Tibial artery (tissue), 4 donors: ENCODE measurements at regions of chr17 and their contacts with region 1.

Region 1: GRCh38 chr17:76278952-76279741 is 14.0 kb downstream of the UBALD2 start:
- DNase-seq: peak; percentile 86 to 89
- H3K4me3 ChIP-seq: no peak overlapping the region
- H3K27ac ChIP-seq: no peak overlapping the region
- H3K4me1 ChIP-seq: peaks cover 0 to 5% (median 0%) of the 10 kb centered on the region in 4 donors
- H3K27me3 ChIP-seq: no peaks in the 10 kb centered on the region
- CTCF ChIP-seq: peak; percentile 95 to 97

Region 2: GRCh38 chr17:75904749-75905521 is 374.2 kb before region 1 on chr17 and contains the start of gene MRPL38:
- intact Hi-C with region 1: loop called (anchors 10 kb)
- DNase-seq: peak; percentile 89 to 96
- H3K4me3 ChIP-seq: peak within 1 kb of the TSS; percentile 75 to 79
- H3K27ac ChIP-seq: peak within 1 kb of the TSS; percentile 84 to 91
- H3K4me1 ChIP-seq: peaks cover 0 to 14% (median 8%) of the 10 kb centered on the region in 4 donors
- H3K27me3 ChIP-seq: no peaks in the 10 kb centered on the region
- CTCF ChIP-seq: peak; percentile 96 to 100

Region 3: GRCh38 chr17:76121932-76122430 is 157.2 kb before region 1 on chr17:
- intact Hi-C with region 1: loop called (anchors 2 kb)
- DNase-seq: no peak
- H3K4me3 ChIP-seq: peak overlapping the region; percentile 39 to 55
- H3K27ac ChIP-seq: peak overlapping the region; percentile 5 to 17
- H3K4me1 ChIP-seq: peaks cover 0 to 11% (median 10%) of the 10 kb centered on the region in 4 donors
- H3K27me3 ChIP-seq: peaks cover 0 to 37% of the 10 kb centered on the region in 2 donors
- CTCF ChIP-seq: no peak

Region 4: GRCh38 chr17:76327696-76328095 is 48.5 kb after region 1 on chr17:
- intact Hi-C with region 1: no loop called
- DNase-seq: peak in 1 of 2 donors; percentile 48
- H3K4me3 ChIP-seq: no peak overlapping the region
- H3K27ac ChIP-seq: no peak overlapping the region
- H3K4me1 ChIP-seq: no peaks in the 10 kb centered on the region
- H3K27me3 ChIP-seq: no peaks in the 10 kb centered on the region
- CTCF ChIP-seq: no peak